AG04450 (cell line): ENCODE measurements at regions of chr11 and their contacts with region 1.

Region 1: GRCh38 chr11:129922674-129923073 is 27.3 kb upstream of the NFRKB start:
- DNase-seq: no peak
- H3K4me3 ChIP-seq: no peak overlapping the region
- H3K27ac ChIP-seq: no peak overlapping the region
- H3K27me3 ChIP-seq: no peaks in the 10 kb centered on the region
- CTCF ChIP-seq: no peak

Region 2: GRCh38 chr11:129911298-129911697 is 11.4 kb before region 1 on chr11:
- CTCF ChIA-PET with region 1: interaction called, 23 read pairs
- POLR2A ChIA-PET with region 1: no interaction called
- DNase-seq: no peak
- H3K4me3 ChIP-seq: no peak overlapping the region
- H3K27ac ChIP-seq: no peak overlapping the region
- H3K27me3 ChIP-seq: no peaks in the 10 kb centered on the region
- CTCF ChIP-seq: no peak

Region 3: DNA sequence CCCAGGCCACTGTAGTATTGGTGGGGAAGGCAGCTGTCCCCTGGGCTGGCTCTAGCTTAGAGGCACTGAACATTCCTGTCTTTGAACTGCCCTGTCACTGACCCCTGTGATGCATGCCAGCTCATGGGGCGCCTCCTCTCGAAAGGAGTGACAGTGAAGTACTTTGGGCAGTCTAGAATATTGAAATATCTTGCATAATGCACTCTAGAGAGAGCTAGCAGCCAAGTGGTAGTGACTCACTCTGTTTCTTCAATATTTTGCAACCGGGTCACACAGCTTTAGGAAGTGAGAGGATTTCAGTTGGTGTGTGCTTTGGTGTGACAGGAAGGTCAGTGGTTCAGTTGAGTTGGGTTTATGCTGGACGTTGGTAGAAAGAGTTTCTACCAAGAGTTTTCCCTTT is 201.4 kb after region 1 on chr11:
- CTCF ChIA-PET with region 1: interaction called, 395 read pairs
- POLR2A ChIA-PET with region 1: interaction called, 3 read pairs
- DNase-seq: peak; percentile 30
- H3K4me3 ChIP-seq: no peak overlapping the region
- H3K27ac ChIP-seq: peak overlapping the region; percentile 31
- H3K27me3 ChIP-seq: no peaks in the 10 kb centered on the region
- CTCF ChIP-seq: no peak